Activated B cell treated with CpG ODN at 0.5 μM for 24 hours (primary cell): ENCODE measurements at regions of chr3 and their contacts with region 1.

Region 1: GRCh38 chr3:58188173-58188564 is 22.6 kb downstream of the DNASE1L3 start:
- DNase-seq: no peak
- ATAC-seq: peak; percentile 18
- H3K4me3 Mint-ChIP-seq: no peak overlapping the region
- H3K27ac Mint-ChIP-seq: peak overlapping the region; percentile 61
- H3K4me1 Mint-ChIP-seq: peaks cover 7% of the 10 kb centered on the region
- H3K27me3 Mint-ChIP-seq: no peaks in the 10 kb centered on the region
- CTCF ChIP-seq: no peak

Region 2: DNA sequence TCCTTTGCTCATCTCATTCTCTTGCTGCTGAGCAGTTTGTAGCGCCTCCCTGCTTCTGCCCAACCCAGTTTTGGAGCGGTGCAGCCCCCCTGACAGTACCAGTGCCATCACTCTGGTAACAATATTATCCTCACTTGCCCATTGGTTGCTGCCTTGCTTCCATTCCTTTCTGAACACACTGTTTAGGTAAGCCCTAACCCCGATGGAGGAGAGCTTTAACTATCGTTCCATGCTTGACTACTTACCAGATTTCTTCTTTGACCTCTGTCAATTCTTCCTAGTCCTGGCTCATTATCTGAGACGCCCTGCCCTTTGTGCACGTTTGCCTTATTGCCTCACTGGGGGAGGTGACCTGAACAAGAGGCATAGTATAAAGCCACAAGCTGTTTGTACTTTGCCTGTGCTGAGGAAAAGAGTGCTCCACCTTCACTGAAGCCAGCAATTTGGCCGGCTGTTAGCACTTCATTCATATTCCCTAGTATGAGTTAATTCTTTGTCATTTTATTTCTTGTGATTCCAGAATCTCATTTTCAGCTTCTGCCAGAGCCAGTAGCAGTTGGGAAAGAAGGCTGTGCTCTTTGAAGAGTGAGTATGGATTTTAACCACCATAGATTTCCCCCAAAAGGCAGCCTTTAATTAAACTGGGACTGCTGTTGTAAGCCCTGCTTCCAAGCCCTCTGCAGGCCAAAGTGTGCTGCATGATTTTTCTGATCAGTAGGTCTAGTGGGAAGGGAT is 61.4 kb after region 1 on chr3:
- CTCF ChIA-PET with region 1: interaction called, 4 read pairs
- POLR2A ChIA-PET with region 1: interaction called, 7 read pairs
- intact Hi-C with region 1: loop called (anchors 1 kb)
- DNase-seq: no peak
- ATAC-seq: peak; percentile 94
- H3K4me3 Mint-ChIP-seq: peak overlapping the region; percentile 49
- H3K27ac Mint-ChIP-seq: peak overlapping the region; percentile 50
- H3K4me1 Mint-ChIP-seq: peaks cover 34% of the 10 kb centered on the region
- H3K27me3 Mint-ChIP-seq: no peaks in the 10 kb centered on the region
- CTCF ChIP-seq: no peak

Region 3: DNA sequence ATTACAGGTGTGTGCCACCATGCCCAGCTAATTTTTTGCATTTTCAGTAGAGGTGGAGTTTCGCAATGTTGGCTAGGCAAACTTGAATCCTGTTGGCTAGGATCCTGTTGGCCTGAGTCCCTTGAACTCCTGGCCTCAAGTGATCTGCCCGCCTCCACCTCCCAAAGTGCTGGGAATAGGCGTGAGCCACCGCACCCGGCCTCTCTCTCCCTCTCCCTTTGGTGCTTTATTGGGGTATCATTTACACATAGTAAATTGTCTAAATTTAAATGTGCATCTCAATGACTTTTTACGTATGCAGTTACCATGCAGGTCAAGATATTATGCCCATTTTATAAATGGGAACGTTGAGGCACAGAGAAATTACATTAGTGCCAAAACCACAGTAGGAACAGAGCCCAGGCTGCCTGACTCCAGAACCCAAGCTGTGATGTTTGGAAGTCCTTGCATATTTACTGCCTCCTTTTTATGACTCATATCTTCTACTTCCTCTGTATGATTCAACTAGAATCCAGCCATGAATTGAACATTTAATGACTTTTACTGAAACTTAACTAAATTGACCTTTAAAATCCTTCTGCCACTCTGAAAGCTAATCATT is 83.8 kb after region 1 on chr3:
- CTCF ChIA-PET with region 1: no interaction called
- POLR2A ChIA-PET with region 1: interaction called, 12 read pairs
- intact Hi-C with region 1: no loop called
- DNase-seq: no peak
- ATAC-seq: no peak
- H3K4me3 Mint-ChIP-seq: peak overlapping the region; percentile 24
- H3K27ac Mint-ChIP-seq: peak overlapping the region; percentile 65
- H3K4me1 Mint-ChIP-seq: peaks cover 8% of the 10 kb centered on the region
- H3K27me3 Mint-ChIP-seq: no peaks in the 10 kb centered on the region
- CTCF ChIP-seq: no peak

Region 4: GRCh38 chr3:58299839-58300516 is 111.8 kb after region 1 on chr3:
- CTCF ChIA-PET with region 1: interaction called, 167 read pairs
- POLR2A ChIA-PET with region 1: interaction called, 23 read pairs
- intact Hi-C with region 1: loop called (anchors 1 kb)
- DNase-seq: no peak
- ATAC-seq: peak; percentile 58
- H3K4me3 Mint-ChIP-seq: no peak overlapping the region
- H3K27ac Mint-ChIP-seq: no peak overlapping the region
- H3K4me1 Mint-ChIP-seq: peaks cover 1% of the 10 kb centered on the region
- H3K27me3 Mint-ChIP-seq: peaks cover 3% of the 10 kb centered on the region
- CTCF ChIP-seq: no peak

Region 5: DNA sequence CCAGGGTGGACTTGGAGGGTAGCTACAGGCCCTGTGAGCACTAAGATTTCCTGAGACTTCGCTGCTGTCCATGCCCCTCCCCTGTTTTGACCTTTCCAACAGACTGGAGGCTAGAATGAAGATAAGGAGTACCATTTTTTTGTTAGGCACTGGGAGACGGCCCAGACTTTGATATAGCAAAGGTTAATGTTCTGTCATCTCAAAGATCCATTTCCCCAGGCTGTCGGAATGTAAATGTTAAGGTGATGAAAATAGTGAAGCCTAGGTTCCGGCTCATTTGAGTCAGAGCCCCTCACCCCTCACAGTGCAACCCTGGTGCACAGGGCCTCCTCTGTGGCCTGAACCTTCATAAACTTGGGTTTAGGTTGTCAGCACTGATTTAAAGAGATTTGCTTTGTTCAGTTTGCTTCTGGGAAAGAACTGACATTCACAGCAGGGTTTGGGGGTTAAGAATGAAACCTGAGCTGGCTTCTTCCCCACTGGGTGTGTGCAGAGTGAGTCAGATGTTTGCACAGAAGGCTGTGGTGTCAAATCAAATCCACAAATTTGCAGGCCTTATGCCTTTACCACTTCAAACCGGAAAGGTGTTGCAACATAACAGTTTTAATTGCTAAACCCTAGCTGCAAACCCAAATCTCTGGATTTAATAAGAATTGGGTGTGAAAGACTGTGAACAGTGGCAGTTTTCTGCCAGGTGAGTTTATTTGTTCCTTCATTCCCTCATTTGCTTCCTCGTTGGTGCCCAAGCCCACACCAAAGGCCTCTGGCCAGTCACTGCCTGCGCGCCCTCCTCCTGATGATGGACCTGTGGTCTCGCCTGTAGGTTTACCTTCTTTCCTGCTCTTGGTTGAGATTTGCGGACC is 283.1 kb after region 1 on chr3:
- CTCF ChIA-PET with region 1: no interaction called
- POLR2A ChIA-PET with region 1: no interaction called
- intact Hi-C with region 1: no loop called
- DNase-seq: no peak
- ATAC-seq: no peak
- H3K4me3 Mint-ChIP-seq: no peak overlapping the region
- H3K27ac Mint-ChIP-seq: no peak overlapping the region
- H3K4me1 Mint-ChIP-seq: peaks cover 20% of the 10 kb centered on the region
- H3K27me3 Mint-ChIP-seq: no peaks in the 10 kb centered on the region
- CTCF ChIP-seq: no peak